CD4-positive, alpha-beta T cell (primary cell): ENCODE measurements at regions of chr4 and their contacts with region 1.

Region 1: DNA sequence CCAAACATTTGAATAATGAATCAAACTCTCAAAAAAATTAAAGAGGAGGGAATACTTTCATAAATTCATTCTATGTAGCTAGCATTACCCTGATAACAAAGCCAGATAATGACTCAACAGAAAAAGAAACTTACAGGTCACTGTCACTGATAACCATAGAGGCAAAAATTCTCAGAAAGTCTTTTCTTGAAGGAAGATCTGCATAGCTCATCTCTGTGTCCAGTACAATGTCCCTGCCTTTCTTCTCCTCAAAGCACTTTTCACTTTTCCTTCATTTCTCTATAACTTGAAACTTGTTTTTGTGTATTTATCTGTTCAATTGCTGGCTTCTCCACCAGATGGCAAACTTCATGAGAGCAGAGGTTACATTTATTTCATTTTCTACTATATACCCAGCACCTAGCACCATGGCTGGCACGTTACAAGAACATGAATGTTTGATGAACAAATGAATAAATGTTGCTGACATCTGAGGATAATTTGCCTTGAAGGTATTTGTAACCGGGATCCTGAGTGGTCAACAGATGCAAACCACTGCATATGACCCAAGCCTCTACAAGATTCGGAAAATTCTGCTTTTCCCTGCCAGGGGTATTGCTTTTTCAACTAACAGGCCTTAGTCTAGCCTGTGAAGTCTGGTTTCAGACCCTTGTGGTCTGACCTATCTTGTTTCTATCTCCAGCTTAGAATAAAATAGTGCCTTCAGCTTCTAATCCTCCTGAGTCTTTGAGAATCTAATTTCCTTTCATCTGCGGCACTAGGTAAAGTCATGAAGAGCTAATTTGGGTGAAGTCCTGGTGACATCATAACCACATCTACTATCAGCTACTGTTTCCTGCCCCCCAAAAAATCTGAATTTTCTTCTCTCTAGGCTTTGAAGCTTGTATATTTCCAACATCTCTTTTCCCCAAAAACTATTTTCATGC is 52.5 kb upstream of the ANTXR2 start:
- DNase-seq: peak in 13 of 14 experiments; percentile 2 to 85 (median 24)
- ATAC-seq: peak; percentile 84
- H3K4me3 ChIP-seq: no peak overlapping the region
- H3K4me3 Mint-ChIP-seq: peak overlapping the region; percentile 42
- H3K27ac ChIP-seq: peak overlapping the region; percentile 77 to 88
- H3K27ac Mint-ChIP-seq: peak overlapping the region; percentile 94
- H3K4me1 ChIP-seq: peaks cover 26% of the 10 kb centered on the region
- H3K4me1 Mint-ChIP-seq: peaks cover 54% of the 10 kb centered on the region
- H3K27me3 ChIP-seq: no peaks in the 10 kb centered on the region
- H3K27me3 Mint-ChIP-seq: no peaks in the 10 kb centered on the region
- CTCF ChIP-seq: peak; percentile 85

Region 2: DNA sequence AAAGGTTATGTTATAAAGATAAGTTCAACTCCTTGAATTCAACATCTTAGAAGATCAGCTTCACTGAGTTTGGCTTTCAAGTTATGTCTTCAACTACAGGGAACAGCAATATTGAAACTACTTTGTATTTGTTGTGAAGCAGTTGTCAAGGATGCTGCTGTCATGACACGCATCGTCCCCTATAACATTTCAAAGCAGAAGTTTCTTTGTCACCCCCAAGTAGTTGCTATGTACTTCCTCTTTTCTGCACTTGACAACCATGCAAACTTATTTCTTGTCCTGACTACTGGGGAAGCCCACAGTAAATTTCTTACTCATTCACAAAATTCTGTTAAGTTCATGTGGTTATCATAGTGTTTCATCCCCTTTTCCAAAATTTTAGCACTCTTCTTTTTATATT is 66.8 kb before region 1 on chr4:
- CTCF ChIA-PET with region 1: interaction called, 3 read pairs
- POLR2A ChIA-PET with region 1: interaction called, 7 read pairs
- intact Hi-C with region 1: loop called in 1 of 2 experiments (anchors 2 kb)
- DNase-seq: peak in 8 of 14 experiments; percentile 16 to 93 (median 38)
- ATAC-seq: peak; percentile 90
- H3K4me3 ChIP-seq: peak overlapping the region; percentile 19
- H3K4me3 Mint-ChIP-seq: peak overlapping the region; percentile 82
- H3K27ac ChIP-seq: peak overlapping the region; percentile 81 to 93
- H3K27ac Mint-ChIP-seq: peak overlapping the region; percentile 93
- H3K4me1 ChIP-seq: peaks cover 13% of the 10 kb centered on the region
- H3K4me1 Mint-ChIP-seq: peaks cover 45% of the 10 kb centered on the region
- H3K27me3 ChIP-seq: no peaks in the 10 kb centered on the region
- H3K27me3 Mint-ChIP-seq: no peaks in the 10 kb centered on the region
- CTCF ChIP-seq: no peak

Region 3: DNA sequence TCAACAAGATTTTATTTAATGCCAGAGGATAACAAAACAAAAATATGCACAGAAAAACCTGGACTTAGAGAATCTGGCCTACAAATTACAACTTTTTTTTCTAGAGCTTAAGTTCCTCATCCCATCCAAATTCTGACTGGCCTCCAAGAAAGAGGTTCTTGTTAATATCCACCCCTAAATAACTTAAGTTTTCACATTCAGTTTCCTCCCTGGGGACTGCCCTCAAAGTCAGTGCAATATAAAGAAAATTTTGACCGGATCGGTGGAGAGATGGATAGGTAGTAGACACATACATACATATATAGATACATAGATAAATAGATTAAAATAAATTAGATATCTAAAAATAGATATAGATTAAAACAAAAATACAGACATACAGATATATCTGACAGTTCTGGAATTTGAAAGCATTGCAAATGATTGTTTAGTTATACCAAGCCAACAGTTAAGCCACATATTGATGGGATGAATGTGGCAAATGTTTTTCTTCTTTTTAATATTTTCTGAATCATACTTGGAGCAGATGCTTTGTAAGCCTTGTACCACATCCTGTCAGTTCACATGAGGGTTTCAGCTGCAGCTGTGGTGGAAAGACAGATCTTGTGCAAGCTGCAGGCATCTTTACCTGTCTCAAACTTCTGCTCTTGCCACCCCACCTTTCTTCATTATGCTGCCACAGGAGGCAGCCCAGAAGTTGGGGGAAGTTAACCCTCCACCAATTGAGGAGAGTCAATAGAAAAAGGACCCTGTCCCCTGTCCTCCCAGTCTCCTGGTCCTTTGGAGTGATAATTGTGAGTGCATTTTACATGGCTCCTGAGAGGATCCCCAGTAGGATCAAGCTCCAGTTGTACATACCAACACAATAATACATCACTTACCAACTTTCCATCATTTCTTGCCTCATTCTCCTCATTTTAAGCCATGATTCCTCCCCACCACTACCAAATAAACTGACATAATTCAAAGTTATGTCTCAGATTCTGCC is 13.3 kb after region 1 on chr4:
- CTCF ChIA-PET with region 1: interaction called, 8 read pairs
- POLR2A ChIA-PET with region 1: interaction called, 33 read pairs
- intact Hi-C with region 1: loop called (anchors 1 to 2 kb)
- DNase-seq: peak; percentile 30 to 85 (median 56)
- ATAC-seq: peak; percentile 98
- H3K4me3 ChIP-seq: no peak overlapping the region
- H3K4me3 Mint-ChIP-seq: peak overlapping the region; percentile 3
- H3K27ac ChIP-seq: peak overlapping the region; percentile 38 to 63
- H3K27ac Mint-ChIP-seq: peak overlapping the region; percentile 73
- H3K4me1 ChIP-seq: peaks cover 15% of the 10 kb centered on the region
- H3K4me1 Mint-ChIP-seq: peaks cover 58% of the 10 kb centered on the region
- H3K27me3 ChIP-seq: no peaks in the 10 kb centered on the region
- H3K27me3 Mint-ChIP-seq: no peaks in the 10 kb centered on the region
- CTCF ChIP-seq: no peak

Region 4: DNA sequence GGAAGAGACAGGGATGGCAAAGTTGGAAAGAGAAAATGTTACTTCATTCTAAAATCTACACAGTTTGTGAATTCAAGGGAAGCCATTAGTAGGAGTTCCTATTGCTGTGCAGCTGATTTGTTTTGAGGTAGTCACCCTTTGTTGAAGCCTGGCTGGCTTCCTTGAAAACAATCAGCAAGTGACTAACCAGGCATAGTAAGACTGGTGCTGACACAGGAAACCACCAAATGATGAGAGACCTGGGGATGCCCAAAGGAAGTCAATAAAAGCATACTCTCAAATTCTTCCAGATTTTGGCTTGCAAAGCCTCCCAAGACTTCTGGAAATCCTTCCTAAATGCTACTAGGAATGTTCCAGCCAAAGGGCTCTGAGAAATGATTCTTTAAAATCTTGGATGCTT is 47.9 kb after region 1 on chr4:
- CTCF ChIA-PET with region 1: interaction called, 21 read pairs
- POLR2A ChIA-PET with region 1: interaction called, 40 read pairs
- intact Hi-C with region 1: loop called in 1 of 2 experiments (anchors 1 kb)
- DNase-seq: peak in 12 of 14 experiments; percentile 23 to 89 (median 52)
- ATAC-seq: peak; percentile 96
- H3K4me3 ChIP-seq: no peak overlapping the region
- H3K4me3 Mint-ChIP-seq: peak overlapping the region; percentile 71
- H3K27ac ChIP-seq: peak overlapping the region; percentile 62 to 89
- H3K27ac Mint-ChIP-seq: peak overlapping the region; percentile 96
- H3K4me1 ChIP-seq: peaks cover 54% of the 10 kb centered on the region
- H3K4me1 Mint-ChIP-seq: peaks cover 65% of the 10 kb centered on the region
- H3K27me3 ChIP-seq: no peaks in the 10 kb centered on the region
- H3K27me3 Mint-ChIP-seq: no peaks in the 10 kb centered on the region
- CTCF ChIP-seq: no peak

Region 5: DNA sequence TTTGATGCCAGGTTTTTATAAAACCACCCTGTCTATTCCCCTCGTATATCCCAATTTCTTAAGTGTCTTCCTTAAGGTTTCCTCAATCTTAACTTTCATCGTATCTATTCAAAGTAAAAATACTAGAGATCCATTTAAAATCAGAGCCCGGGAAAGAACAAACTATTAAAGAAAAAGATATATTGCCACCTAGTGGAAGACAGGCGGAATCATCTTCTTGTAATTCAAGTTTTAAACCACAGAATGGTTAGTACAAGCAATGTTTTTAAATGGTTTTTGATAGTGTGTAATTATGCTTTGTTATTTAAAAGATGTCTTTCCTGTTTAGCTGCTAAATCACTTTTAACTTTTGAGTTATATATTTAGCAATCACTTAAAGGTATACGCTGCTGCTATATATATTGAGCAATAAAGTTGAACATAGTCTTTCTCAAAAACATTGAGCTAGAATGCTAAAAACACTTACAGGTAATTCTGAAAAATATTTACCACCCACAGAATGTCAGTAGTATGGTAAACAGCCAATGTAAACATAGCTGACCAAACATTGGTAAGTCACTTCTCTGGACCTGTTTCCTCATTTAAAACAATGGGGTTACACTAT is 90.0 kb after region 1 on chr4:
- CTCF ChIA-PET with region 1: interaction called, 4 read pairs
- POLR2A ChIA-PET with region 1: no interaction called
- intact Hi-C with region 1: loop called in 1 of 2 experiments (anchors 1 kb)
- DNase-seq: peak in 3 of 14 experiments; percentile 50 to 59 (median 51)
- ATAC-seq: no peak
- H3K4me3 ChIP-seq: no peak overlapping the region
- H3K4me3 Mint-ChIP-seq: no peak overlapping the region
- H3K27ac ChIP-seq: no peak overlapping the region
- H3K27ac Mint-ChIP-seq: no peak overlapping the region
- H3K4me1 ChIP-seq: no peaks in the 10 kb centered on the region
- H3K4me1 Mint-ChIP-seq: no peaks in the 10 kb centered on the region
- H3K27me3 ChIP-seq: peaks cover 3 to 30% of the 10 kb centered on the region in 2 experiments
- H3K27me3 Mint-ChIP-seq: peaks cover 38% of the 10 kb centered on the region
- CTCF ChIP-seq: peak; percentile 92